ENCODE measurements at regions of chr7 and their contacts with region 1.

Region 1: DNA sequence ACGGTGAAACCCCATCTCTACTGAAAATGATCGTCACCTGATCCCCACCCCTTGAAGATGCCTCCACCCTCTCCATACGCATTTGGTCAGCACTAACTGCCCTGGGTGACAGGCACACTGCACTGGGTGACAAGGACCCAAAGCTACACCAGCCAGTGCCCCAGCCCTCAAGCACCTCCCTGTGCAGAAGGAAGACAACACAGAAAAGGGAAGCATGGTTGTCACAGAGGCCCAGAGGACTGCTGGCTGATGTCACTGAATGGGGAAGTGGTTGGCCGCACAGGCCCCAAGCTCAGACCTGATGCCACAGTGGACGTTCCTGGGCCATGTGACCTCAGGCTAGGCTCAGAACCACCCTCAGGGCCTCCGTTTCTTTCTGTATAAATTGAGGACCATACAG is 4.2 kb upstream of the PILRA start:
- DNase-seq: peak; percentile 69
- ATAC-seq: peak; percentile 80
- H3K4me3 Mint-ChIP-seq: peak overlapping the region; percentile 44
- H3K27ac Mint-ChIP-seq: peak overlapping the region; percentile 91
- H3K4me1 Mint-ChIP-seq: peaks cover 92% of the 10 kb centered on the region
- H3K27me3 Mint-ChIP-seq: no peaks in the 10 kb centered on the region
- CTCF ChIP-seq: no peak

Region 2: DNA sequence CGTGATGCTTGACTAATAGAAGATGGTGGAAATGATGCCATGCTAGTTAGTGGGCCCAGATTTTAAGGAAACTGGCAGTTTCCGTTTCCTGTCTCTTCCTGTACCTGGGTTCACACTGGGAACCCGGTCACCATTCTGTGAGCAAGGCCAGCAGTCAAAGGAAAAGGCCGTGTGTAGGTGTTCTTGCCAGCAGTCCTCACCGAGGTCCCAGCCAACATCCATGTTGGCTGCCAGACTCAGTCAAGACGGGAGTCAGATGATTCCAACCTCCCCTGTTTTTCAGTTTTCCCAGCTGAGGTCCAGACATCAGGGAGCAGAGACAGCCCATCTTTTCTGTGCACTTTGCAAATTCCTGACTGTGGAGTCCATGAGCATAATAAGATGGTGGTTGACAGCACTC is 26.3 kb before region 1 on chr7:
- CTCF ChIA-PET with region 1: interaction called, 4 read pairs
- POLR2A ChIA-PET with region 1: interaction called, 8 read pairs
- intact Hi-C with region 1: loop called (anchors 1 kb)
- DNase-seq: no peak
- ATAC-seq: no peak
- H3K4me3 Mint-ChIP-seq: no peak overlapping the region
- H3K27ac Mint-ChIP-seq: peak overlapping the region; percentile 76
- H3K4me1 Mint-ChIP-seq: peaks cover 43% of the 10 kb centered on the region
- H3K27me3 Mint-ChIP-seq: no peaks in the 10 kb centered on the region
- CTCF ChIP-seq: no peak

Region 3: DNA sequence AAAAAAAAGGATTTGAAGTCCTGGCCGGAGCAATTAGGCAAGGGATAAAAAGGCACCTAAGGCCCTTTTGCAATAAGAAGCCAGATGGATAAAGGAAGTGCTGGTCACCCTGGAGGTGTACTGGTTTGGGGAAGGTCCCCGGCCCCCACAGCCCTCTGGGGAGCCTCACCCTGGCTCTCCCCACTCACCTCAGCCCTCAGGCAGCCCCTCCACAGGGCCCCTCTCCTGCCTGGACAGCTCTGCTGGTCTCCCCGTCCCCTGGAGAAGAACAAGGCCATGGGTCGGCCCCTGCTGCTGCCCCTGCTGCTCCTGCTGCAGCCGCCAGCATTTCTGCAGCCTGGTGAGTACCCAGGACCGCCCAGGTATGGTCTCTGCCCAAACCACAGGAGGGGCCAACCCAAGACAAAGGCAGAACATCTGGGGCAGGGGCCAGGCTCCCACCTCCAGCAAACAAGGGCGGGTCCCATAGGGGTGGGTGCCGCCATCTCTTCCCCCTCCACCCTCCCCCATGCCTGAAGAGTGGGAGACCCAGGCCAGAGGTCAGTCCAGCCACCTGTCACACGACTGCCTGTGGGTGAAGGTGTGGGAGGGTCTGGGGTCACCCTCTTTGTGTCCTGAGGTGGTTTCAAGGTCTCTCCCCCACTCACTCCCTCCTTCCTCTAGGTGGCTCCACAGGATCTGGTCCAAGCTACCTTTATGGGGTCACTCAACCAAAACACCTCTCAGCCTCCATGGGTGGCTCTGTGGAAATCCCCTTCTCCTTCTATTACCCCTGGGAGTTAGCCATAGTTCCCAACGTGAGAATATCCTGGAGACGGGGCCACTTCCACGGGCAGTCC is 10.9 kb before region 1 on chr7 and contains the start of gene PILRB:
- CTCF ChIA-PET with region 1: interaction called, 5 read pairs
- POLR2A ChIA-PET with region 1: interaction called, 10 read pairs
- intact Hi-C with region 1: loop called (anchors 1 kb)
- DNase-seq: no peak
- ATAC-seq: peak; percentile 90
- H3K4me3 Mint-ChIP-seq: no peak within 1 kb of the TSS
- H3K27ac Mint-ChIP-seq: peak within 1 kb of the TSS; percentile 63
- H3K4me1 Mint-ChIP-seq: peaks cover 26% of the 10 kb centered on the region
- H3K27me3 Mint-ChIP-seq: no peaks in the 10 kb centered on the region
- CTCF ChIP-seq: no peak
- total RNA-seq, gene PILRB: 65.8 and 79.4 TPM in 2 replicates

Region 4: DNA sequence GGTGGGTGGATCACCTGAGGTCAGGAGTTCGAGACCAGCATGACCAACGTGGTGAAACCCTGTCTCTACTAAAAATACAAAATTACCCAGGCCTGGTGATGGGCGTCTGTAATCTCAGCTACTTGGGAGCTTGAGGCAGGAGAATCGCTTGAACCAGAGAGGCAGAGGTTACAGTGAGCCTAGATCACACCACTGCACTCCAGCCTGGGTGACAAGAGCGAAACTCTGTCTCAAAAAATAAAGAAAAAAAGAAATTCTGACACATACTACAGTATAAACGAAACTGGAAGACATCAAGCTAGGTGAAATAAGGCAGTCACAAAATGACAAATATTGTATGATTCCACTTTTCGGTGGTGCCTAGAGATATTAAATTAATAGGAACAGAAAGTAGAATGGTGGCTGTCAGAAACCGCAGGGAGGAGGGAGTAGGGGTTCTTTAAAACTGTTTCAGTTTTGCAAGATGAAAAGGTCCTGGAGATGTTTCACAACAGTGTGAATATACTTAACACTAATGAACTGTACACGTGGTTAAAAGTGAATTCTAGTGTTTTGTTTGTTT is 27.4 kb after region 1 on chr7:
- CTCF ChIA-PET with region 1: no interaction called
- POLR2A ChIA-PET with region 1: interaction called, 31 read pairs
- intact Hi-C with region 1: loop called (anchors 1 kb)
- DNase-seq: no peak
- ATAC-seq: peak; percentile 89
- H3K4me3 Mint-ChIP-seq: peak overlapping the region; percentile 73
- H3K27ac Mint-ChIP-seq: peak overlapping the region; percentile 93
- H3K4me1 Mint-ChIP-seq: peaks cover 59% of the 10 kb centered on the region
- H3K27me3 Mint-ChIP-seq: no peaks in the 10 kb centered on the region
- CTCF ChIP-seq: no peak

Region 5: GRCh38 chr7:100444311-100445278 is 75.5 kb after region 1 on chr7:
- CTCF ChIA-PET with region 1: interaction called, 4 read pairs
- POLR2A ChIA-PET with region 1: interaction called, 12 read pairs
- intact Hi-C with region 1: no loop called
- DNase-seq: no peak
- ATAC-seq: peak; percentile 60
- H3K4me3 Mint-ChIP-seq: no peak overlapping the region
- H3K27ac Mint-ChIP-seq: peak overlapping the region; percentile 53
- H3K4me1 Mint-ChIP-seq: peaks cover 18% of the 10 kb centered on the region
- H3K27me3 Mint-ChIP-seq: no peaks in the 10 kb centered on the region
- CTCF ChIP-seq: no peak

Region 6: DNA sequence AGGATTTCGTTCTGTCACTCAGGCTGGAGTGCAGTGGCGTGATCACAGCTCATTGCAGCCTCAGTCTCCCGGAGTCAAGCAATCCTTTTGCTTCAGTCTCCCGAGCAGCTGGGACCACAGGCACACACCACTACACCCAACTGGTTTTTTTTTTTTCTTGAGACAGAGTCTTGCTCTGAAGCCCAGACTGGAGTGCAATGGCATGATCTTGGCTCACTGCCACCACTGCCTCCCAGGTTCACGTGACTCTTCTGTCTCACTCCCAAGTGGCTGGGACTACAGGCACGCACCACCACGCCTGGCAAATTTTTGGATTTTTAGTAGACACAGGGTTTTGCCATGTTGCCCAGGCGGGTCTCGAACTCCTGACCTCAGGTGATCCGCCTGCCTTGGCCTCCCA is 293.3 kb after region 1 on chr7:
- CTCF ChIA-PET with region 1: no interaction called
- POLR2A ChIA-PET with region 1: no interaction called
- intact Hi-C with region 1: no loop called
- DNase-seq: no peak
- ATAC-seq: no peak
- H3K4me3 Mint-ChIP-seq: no peak overlapping the region
- H3K27ac Mint-ChIP-seq: no peak overlapping the region
- H3K4me1 Mint-ChIP-seq: peaks cover under 1% of the 10 kb centered on the region
- H3K27me3 Mint-ChIP-seq: peaks cover 22% of the 10 kb centered on the region
- CTCF ChIP-seq: no peak